ENCODE measurements at regions of chr4 and their contacts with region 1.

Region 1: GRCh38 chr4:48546336-48546735 is 56.3 kb downstream of the ZAR1 start:
- DNase-seq: no peak

Region 2: GRCh38 chr4:48311896-48312295 is 234.4 kb before region 1 on chr4:
- intact Hi-C with region 1: no loop called
- DNase-seq: no peak

Region 3: DNA sequence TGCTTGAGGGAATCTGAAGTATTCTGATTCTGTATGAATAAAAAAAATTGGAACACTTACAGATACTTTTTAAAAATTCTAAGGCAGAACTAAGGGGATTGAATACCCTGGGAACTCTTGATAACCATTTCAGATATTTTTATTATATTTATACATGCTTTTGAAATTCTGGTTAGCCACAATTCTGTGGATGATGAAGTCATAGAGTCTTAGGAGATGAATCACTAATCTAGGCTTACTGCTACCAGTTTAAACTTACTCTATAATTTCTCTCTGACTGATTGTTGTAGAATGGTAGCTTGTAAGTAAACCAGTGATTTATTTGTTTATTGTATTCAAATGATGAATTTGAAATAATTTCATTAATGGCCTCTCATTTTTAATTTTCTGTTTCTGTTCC is 216.4 kb before region 1 on chr4:
- intact Hi-C with region 1: loop called (anchors 10 kb)
- DNase-seq: no peak